H1 (cell line): ENCODE measurements at regions of chr20 and their contacts with region 1.

Region 1: GRCh38 chr20:34544109-34544793 is 14.3 kb upstream of the MAP1LC3A start:
- DNase-seq: peak in 1 of 2 experiments; percentile 67
- H3K4me3 ChIP-seq: peak overlapping the region; percentile 23 to 55 (median 30); a peak in 7 of 8 replicates
- H3K27ac ChIP-seq: no peak overlapping the region
- H3K4me1 ChIP-seq: peaks cover 0 to 9% (median 2%) of the 10 kb centered on the region in 4 experiments; a peak in 3 of 7 replicates
- H3K27me3 ChIP-seq: no peaks in the 10 kb centered on the region
- CTCF ChIP-seq: no peak
- EP300 ChIP-seq: peak in 1 of 2 experiments; percentile 41; a peak in 1 of 3 replicates
- POLR2A ChIP-seq: no peak
- RAD21 ChIP-seq: no peak; a peak in 1 of 4 replicates

Region 2: GRCh38 chr20:34528921-34529297 is 15.3 kb before region 1 on chr20:
- CTCF ChIA-PET with region 1: interaction called, 10 read pairs
- POLR2A ChIA-PET with region 1: interaction called, 5 read pairs
- DNase-seq: no peak
- H3K4me3 ChIP-seq: no peak overlapping the region
- H3K27ac ChIP-seq: no peak overlapping the region
- H3K4me1 ChIP-seq: no peaks in the 10 kb centered on the region
- H3K27me3 ChIP-seq: no peaks in the 10 kb centered on the region
- CTCF ChIP-seq: no peak
- EP300 ChIP-seq: no peak
- POLR2A ChIP-seq: no peak
- RAD21 ChIP-seq: no peak

Region 3: DNA sequence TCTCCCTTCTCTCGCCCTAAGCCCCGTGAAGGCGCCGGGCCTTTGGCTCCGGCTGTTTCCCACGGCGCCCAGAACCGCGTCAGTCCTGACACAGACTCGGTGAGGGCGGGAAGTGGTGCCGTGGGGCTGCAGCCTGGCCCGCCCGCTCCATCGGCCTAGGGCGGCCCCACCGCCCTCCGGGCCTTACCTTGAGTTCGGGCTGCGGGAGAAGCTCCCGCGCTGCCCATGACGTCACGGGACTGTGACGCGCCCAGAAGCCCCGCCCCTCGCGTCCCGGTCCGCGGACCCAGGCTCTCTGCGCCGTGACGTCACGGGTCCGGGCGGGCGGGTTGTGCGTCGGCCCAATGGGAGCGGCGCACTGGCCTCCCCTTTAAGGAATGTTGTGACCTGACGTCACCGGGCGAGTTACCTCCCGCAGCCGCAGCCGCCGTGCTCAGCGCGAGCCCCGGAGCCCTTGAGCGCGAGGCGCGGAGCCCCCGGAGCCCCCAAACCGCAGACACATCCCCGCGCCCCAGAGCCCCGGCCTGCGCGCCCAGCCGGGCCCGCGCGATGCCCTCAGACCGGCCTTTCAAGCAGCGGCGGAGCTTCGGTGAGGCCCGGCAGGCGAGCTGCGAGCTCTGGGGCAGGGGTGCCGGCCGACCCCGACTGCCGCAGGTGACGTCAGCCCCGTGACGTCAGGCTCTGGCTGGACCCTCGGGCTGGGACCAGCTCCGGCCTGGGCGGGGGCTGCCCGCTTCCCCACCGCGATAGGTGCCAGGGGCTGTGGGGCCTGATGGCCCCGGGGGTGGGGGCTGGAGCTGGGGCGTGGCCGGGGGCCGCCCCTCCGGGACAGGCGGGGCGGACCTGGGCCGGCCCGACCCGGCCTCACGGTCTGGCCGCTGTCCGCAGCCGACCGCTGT is 14.3 kb after region 1 on chr20 and contains the start of gene MAP1LC3A:
- CTCF ChIA-PET with region 1: interaction called, 10 read pairs
- POLR2A ChIA-PET with region 1: interaction called, 3 read pairs
- DNase-seq: peak; percentile 46 to 97
- H3K4me3 ChIP-seq: peak within 1 kb of the TSS; percentile 51 to 80 (median 56)
- H3K27ac ChIP-seq: peak within 1 kb of the TSS; percentile 50; the same call in 1 of the 2 replicates
- H3K4me1 ChIP-seq: peaks cover 0 to 2% (median 0%) of the 10 kb centered on the region in 4 experiments; a peak in 1 of 7 replicates
- H3K27me3 ChIP-seq: peaks cover 0 to 2% (median 0%) of the 10 kb centered on the region in 4 experiments; a peak in 1 of 7 replicates
- CTCF ChIP-seq: no peak
- EP300 ChIP-seq: no peak; a peak in 1 of 3 replicates
- POLR2A ChIP-seq: peak in 1 of 2 experiments; percentile 59; a peak in 2 of 3 replicates
- RAD21 ChIP-seq: no peak
- total RNA-seq, gene MAP1LC3A: 5.0 and 6.3 TPM in 2 replicates

Region 4: DNA sequence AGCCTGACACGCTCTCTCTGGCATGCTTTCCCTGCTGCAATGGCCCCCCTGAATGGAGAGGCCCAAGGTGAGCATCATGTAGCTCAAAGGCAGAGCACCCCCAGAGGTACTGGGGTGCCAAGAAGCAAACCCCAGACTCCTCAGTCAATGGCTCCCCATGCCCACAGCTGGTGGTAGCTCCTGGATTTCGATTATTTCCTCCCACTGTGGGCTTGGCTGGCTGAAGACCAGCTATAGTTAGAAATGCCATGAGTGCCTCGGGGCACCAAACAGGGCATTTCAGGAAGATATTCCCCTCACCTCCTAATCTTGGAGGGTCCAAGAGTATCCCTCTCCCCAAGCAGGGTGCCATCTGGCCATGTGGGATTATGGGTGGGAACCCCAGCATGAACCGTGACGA is 31.0 kb after region 1 on chr20:
- CTCF ChIA-PET with region 1: no interaction called
- POLR2A ChIA-PET with region 1: no interaction called
- DNase-seq: no peak
- H3K4me3 ChIP-seq: no peak overlapping the region
- H3K27ac ChIP-seq: no peak overlapping the region
- H3K4me1 ChIP-seq: no peaks in the 10 kb centered on the region
- H3K27me3 ChIP-seq: no peaks in the 10 kb centered on the region
- CTCF ChIP-seq: no peak
- EP300 ChIP-seq: no peak
- POLR2A ChIP-seq: no peak
- RAD21 ChIP-seq: no peak

Region 5: DNA sequence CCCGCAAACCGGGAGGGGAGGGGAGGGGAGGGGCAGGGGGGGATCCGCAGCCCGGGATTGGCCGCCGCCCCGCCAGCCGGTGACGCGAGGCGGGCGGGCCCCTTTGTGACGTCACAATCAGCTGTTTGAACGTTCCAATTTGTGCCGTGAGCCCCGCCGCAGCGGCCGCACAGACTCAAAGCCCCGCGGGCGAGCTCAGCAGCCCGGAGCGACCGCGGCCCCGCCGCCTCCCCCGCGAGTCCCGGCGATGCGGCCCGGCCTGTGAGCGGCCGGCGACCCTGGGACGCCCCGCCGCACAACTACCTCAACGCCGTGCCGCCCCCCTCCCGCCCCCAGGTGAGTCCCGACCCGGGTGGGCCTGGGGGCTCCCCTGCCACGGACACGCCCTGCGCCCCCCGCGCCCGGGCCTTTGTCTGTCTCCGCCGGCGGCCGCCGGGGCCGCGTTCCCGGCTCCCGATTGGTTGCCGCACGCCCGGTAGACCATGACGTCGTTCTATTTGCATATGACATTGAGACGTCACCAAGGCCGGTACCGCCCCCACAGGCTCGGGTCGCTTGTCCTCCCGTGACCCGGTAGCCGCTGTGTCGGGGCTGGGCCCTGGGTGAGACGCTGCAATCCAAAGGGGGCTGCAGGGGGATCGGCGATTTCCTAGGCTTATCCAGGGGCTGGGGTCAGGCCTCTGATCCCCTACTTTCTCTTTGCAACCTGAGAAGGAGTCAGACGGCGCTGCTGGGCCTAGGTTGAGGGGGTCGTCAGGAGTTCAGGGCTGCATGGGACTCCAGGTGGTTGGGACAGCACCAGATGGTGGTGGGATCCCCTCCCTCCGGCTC is 160.1 kb after region 1 on chr20 and contains the start of gene TP53INP2:
- CTCF ChIA-PET with region 1: interaction called, 18 read pairs
- POLR2A ChIA-PET with region 1: interaction called, 5 read pairs
- DNase-seq: peak in 1 of 2 experiments; percentile 95
- H3K4me3 ChIP-seq: peak within 1 kb of the TSS; percentile 75 to 90 (median 82)
- H3K27ac ChIP-seq: peak within 1 kb of the TSS; percentile 73; the same call in 1 of the 2 replicates
- H3K4me1 ChIP-seq: peaks cover 0 to 9% (median 5%) of the 10 kb centered on the region in 4 experiments; a peak in 4 of 7 replicates
- H3K27me3 ChIP-seq: peaks cover 0 to 16% (median 13%) of the 10 kb centered on the region in 4 experiments; a peak in 6 of 7 replicates
- CTCF ChIP-seq: no peak
- EP300 ChIP-seq: no peak; a peak in 1 of 3 replicates
- POLR2A ChIP-seq: peak; percentile 64 to 66
- RAD21 ChIP-seq: no peak
- total RNA-seq, gene TP53INP2: 4.5 and 4.8 TPM in 2 replicates